Naive thymus-derived CD4-positive, alpha-beta T cell (primary cell): ENCODE measurements at regions of chr11 and their contacts with region 1.

Region 1: DNA sequence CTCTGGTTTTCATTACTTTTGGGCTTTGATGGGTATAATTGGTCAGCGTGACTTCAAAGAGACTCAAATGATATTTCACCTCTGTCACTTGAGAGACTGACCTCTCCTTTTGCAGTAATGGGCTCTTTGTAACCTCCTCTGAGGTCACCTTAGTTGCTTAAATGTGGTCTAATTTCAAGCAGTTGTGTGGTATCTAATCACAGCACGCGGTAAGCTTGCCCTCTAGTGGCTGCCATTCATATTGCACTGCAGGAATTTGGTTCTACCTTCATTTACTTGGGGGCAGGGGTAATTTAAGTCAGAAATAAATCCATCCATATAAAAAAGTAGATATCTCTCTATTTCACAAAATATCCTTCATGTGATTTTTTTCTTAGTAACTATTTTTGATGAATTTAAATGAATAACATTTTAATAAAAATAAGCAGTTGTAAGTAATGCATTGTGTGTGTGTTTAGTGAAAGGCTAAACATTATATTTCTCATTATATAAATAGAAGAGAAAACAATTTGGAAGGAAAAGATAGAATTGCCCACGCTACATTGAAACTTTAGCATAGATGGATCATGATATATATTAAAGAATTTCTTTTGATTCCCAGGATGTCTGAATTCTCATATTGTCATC is 55.0 kb upstream of the ANO3 start:
- DNase-seq: peak in 5 of 9 donors; percentile 2 to 28 (median 13)
- ATAC-seq: peak; percentile 70
- H3K4me3 ChIP-seq: no peak overlapping the region
- H3K4me3 Mint-ChIP-seq: no peak overlapping the region
- H3K27ac ChIP-seq: no peak overlapping the region
- H3K27ac Mint-ChIP-seq: no peak overlapping the region
- H3K4me1 ChIP-seq: no peaks in the 10 kb centered on the region
- H3K4me1 Mint-ChIP-seq: no peaks in the 10 kb centered on the region
- H3K27me3 ChIP-seq: no peaks in the 10 kb centered on the region
- H3K27me3 Mint-ChIP-seq: peaks cover 0 to 13% (median 10%) of the 10 kb centered on the region in 5 donors

Region 2: DNA sequence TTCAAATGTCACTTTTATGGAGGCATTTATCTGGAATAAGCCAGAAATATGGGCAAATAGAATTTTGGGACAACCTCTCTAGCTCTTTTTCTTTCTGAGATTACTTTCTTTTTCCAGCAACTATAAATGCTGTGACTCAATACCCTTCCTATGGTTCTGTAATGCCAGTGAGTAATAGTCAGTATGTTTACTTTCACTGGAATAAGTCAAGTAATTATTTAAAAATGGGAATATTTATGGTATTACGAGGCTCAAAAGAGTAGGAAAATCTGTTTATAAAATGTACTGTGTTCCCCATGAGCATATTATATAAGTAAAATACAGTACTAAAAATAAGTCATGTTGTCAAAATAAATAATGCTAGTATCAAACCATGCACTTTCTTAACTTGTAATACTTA is 1029.6 kb before region 1 on chr11:
- CTCF ChIA-PET with region 1: no interaction called
- POLR2A ChIA-PET with region 1: no interaction called
- intact Hi-C with region 1: no loop called
- DNase-seq: no peak
- ATAC-seq: no peak
- H3K4me3 ChIP-seq: no peak overlapping the region
- H3K4me3 Mint-ChIP-seq: no peak overlapping the region
- H3K27ac ChIP-seq: no peak overlapping the region
- H3K27ac Mint-ChIP-seq: no peak overlapping the region
- H3K4me1 ChIP-seq: no peaks in the 10 kb centered on the region
- H3K4me1 Mint-ChIP-seq: no peaks in the 10 kb centered on the region
- H3K27me3 ChIP-seq: no peaks in the 10 kb centered on the region
- H3K27me3 Mint-ChIP-seq: no peaks in the 10 kb centered on the region

Region 3: DNA sequence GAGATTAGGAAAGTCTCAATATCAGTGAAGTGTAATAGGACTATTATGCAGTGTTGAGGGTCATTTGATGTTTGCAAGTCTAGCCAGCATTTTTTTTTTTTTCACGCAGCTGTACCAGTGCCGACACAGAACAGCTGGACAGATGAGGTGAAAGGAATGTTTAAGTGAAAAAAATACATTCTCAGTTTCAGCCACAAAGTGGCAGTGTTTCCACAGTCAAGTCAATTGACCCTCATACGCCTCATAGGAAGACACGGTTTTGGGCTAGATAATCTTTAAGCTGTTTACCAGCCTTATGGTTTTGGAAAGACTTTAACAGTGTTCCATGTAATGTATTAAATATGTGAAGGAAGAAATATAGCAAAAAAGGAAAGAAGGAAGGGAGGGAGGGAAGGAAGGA is 294.9 kb before region 1 on chr11:
- CTCF ChIA-PET with region 1: no interaction called
- POLR2A ChIA-PET with region 1: no interaction called
- intact Hi-C with region 1: loop called in 1 of 2 experiments (anchors 5 kb)
- DNase-seq: no peak
- ATAC-seq: no peak
- H3K4me3 ChIP-seq: no peak overlapping the region
- H3K4me3 Mint-ChIP-seq: no peak overlapping the region
- H3K27ac ChIP-seq: no peak overlapping the region
- H3K27ac Mint-ChIP-seq: no peak overlapping the region
- H3K4me1 ChIP-seq: no peaks in the 10 kb centered on the region
- H3K4me1 Mint-ChIP-seq: no peaks in the 10 kb centered on the region
- H3K27me3 ChIP-seq: no peaks in the 10 kb centered on the region
- H3K27me3 Mint-ChIP-seq: no peaks in the 10 kb centered on the region

Region 4: DNA sequence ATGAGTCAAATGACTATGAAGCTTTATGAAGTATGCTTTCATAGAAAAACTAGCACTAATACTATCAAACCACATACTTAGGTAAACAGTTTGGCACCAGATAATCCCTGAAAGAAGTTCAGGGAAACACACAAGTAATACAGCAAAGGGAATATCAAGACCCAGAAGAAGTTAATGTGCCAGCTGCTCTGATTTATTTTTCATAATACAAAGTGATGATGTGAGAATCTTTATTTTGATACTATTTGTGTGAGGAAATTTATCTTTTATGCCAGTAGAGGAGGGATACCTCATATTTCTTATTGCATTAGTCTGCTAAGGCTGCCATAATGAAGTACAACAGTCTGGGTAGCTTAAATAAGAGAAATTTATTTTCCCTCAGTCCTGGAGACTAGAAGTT is 12.6 kb before region 1 on chr11:
- CTCF ChIA-PET with region 1: no interaction called
- POLR2A ChIA-PET with region 1: no interaction called
- intact Hi-C with region 1: no loop called
- DNase-seq: no peak
- ATAC-seq: no peak
- H3K4me3 ChIP-seq: no peak overlapping the region
- H3K4me3 Mint-ChIP-seq: no peak overlapping the region
- H3K27ac ChIP-seq: no peak overlapping the region
- H3K27ac Mint-ChIP-seq: no peak overlapping the region
- H3K4me1 ChIP-seq: no peaks in the 10 kb centered on the region
- H3K4me1 Mint-ChIP-seq: no peaks in the 10 kb centered on the region
- H3K27me3 ChIP-seq: no peaks in the 10 kb centered on the region
- H3K27me3 Mint-ChIP-seq: no peaks in the 10 kb centered on the region